ENCODE measurements at regions of chr10 and their contacts with region 1.

Region 1: GRCh38 chr10:107919626-107920235 is 755.2 kb upstream of the SORCS1 start:
- DNase-seq: no peak
- H3K4me3 ChIP-seq: no peak overlapping the region
- H3K27ac ChIP-seq: no peak overlapping the region
- H3K4me1 ChIP-seq: no peaks in the 10 kb centered on the region
- H3K27me3 ChIP-seq: peaks cover 0 to 6% of the 10 kb centered on the region in 2 donors
- CTCF ChIP-seq: no peak
- POLR2A ChIP-seq: no peak

Region 2: GRCh38 chr10:109701633-109702215 is 1782.0 kb after region 1 on chr10:
- intact Hi-C with region 1: loop called (anchors 5 kb)
- DNase-seq: no peak
- H3K4me3 ChIP-seq: no peak overlapping the region
- H3K27ac ChIP-seq: no peak overlapping the region
- H3K4me1 ChIP-seq: no peaks in the 10 kb centered on the region
- H3K27me3 ChIP-seq: no peaks in the 10 kb centered on the region
- CTCF ChIP-seq: no peak
- POLR2A ChIP-seq: no peak

Measured in breast epithelium (tissue), 4 donors.